ENCODE measurements at regions of chr17 and their contacts with region 1.

Region 1: GRCh38 chr17:75261336-75262111 is at the starts of genes GGA3 and MRPS7:
- DNase-seq: peak; percentile 92 to 97 (median 95)
- ATAC-seq: peak; percentile 94
- H3K4me3 ChIP-seq: peak within 1 kb of the TSS; percentile 90
- H3K4me3 Mint-ChIP-seq: peak within 1 kb of the TSS; percentile 100
- H3K27ac ChIP-seq: peak within 1 kb of the TSS; percentile 94 to 96
- H3K27ac Mint-ChIP-seq: peak within 1 kb of the TSS; percentile 100
- H3K4me1 ChIP-seq: peaks cover 35% of the 10 kb centered on the region
- H3K4me1 Mint-ChIP-seq: peaks cover 58% of the 10 kb centered on the region
- H3K27me3 ChIP-seq: no peaks in the 10 kb centered on the region
- H3K27me3 Mint-ChIP-seq: no peaks in the 10 kb centered on the region
- CTCF ChIP-seq: no peak
- total RNA-seq, gene GGA3: 88.8 to 96.5 TPM
- total RNA-seq, gene MRPS7: 33.2 to 35.2 TPM

Region 2: GRCh38 chr17:74873038-74873873 is 388.3 kb before region 1 on chr17:
- CTCF ChIA-PET with region 1: no interaction called
- POLR2A ChIA-PET with region 1: interaction called, 6 read pairs
- intact Hi-C with region 1: loop called in 1 of 2 experiments (anchors 5 kb)
- DNase-seq: peak; percentile 98 to 100 (median 99)
- ATAC-seq: peak; percentile 94
- H3K4me3 ChIP-seq: peak overlapping the region; percentile 67
- H3K4me3 Mint-ChIP-seq: peak overlapping the region; percentile 90
- H3K27ac ChIP-seq: peak overlapping the region; percentile 89 to 92
- H3K27ac Mint-ChIP-seq: peak overlapping the region; percentile 92
- H3K4me1 ChIP-seq: peaks cover 25% of the 10 kb centered on the region
- H3K4me1 Mint-ChIP-seq: peaks cover 24% of the 10 kb centered on the region
- H3K27me3 ChIP-seq: no peaks in the 10 kb centered on the region
- H3K27me3 Mint-ChIP-seq: no peaks in the 10 kb centered on the region
- CTCF ChIP-seq: no peak

Region 3: GRCh38 chr17:74888469-74888868 is 373.1 kb before region 1 on chr17:
- CTCF ChIA-PET with region 1: no interaction called
- POLR2A ChIA-PET with region 1: no interaction called
- intact Hi-C with region 1: no loop called
- DNase-seq: no peak
- ATAC-seq: no peak
- H3K4me3 ChIP-seq: no peak overlapping the region
- H3K4me3 Mint-ChIP-seq: no peak overlapping the region
- H3K27ac ChIP-seq: no peak overlapping the region
- H3K27ac Mint-ChIP-seq: no peak overlapping the region
- H3K4me1 ChIP-seq: peaks cover 10% of the 10 kb centered on the region
- H3K4me1 Mint-ChIP-seq: no peaks in the 10 kb centered on the region
- H3K27me3 ChIP-seq: peaks cover 19 to 23% of the 10 kb centered on the region in 2 experiments
- H3K27me3 Mint-ChIP-seq: peaks cover 20% of the 10 kb centered on the region
- CTCF ChIP-seq: no peak

Region 4: DNA sequence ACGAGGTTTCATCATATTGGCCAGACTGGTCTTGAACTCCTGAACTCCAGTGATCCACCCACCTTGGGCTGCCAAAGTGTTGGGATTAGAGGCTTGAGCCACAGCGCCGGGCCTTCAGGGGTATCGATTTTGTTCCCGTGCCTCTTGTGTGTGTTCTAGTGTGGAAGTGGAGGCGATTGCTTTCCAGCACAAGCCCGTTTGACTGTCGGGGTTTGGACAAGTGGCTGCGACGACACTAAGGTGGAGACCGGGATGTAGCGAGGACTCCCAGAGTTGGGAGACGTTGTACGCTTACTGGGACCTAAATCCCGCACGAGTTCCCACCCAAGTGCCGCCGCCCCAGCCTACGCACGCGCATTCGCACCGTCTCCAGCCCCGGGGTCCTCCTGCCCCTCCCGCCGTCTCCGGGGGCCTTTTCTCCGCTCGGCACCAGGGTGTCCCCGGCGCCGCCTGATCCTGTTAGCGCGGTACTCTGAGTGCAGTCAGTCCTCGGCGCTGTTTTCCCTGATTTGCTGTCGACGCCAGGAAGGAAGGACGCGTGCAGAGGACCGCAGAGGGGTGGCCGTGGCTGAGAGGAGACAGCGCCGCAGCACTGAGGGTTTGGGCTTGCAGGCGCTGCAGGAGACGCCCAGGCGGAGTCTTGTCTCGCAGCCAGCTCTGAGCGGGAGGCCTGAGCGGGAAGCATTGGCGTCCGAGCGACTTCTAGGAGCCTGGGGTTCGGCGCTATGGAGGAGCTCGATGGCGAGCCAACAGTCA is 56.3 kb before region 1 on chr17 and contains the start of gene NUP85:
- CTCF ChIA-PET with region 1: no interaction called
- POLR2A ChIA-PET with region 1: interaction called, 12 read pairs
- intact Hi-C with region 1: loop called in 1 of 2 experiments (anchors 2 kb)
- DNase-seq: peak; percentile 87 to 95 (median 90)
- ATAC-seq: peak; percentile 89
- H3K4me3 ChIP-seq: peak within 1 kb of the TSS; percentile 95
- H3K4me3 Mint-ChIP-seq: peak within 1 kb of the TSS; percentile 96
- H3K27ac ChIP-seq: peak within 1 kb of the TSS; percentile 91 to 94
- H3K27ac Mint-ChIP-seq: peak within 1 kb of the TSS; percentile 95
- H3K4me1 ChIP-seq: peaks cover 28% of the 10 kb centered on the region
- H3K4me1 Mint-ChIP-seq: peaks cover 27% of the 10 kb centered on the region
- H3K27me3 ChIP-seq: no peaks in the 10 kb centered on the region
- H3K27me3 Mint-ChIP-seq: no peaks in the 10 kb centered on the region
- CTCF ChIP-seq: no peak
- total RNA-seq, gene NUP85: 84.7 to 89.2 TPM

Region 5: GRCh38 chr17:75238684-75239191 is 22.8 kb before region 1 on chr17:
- CTCF ChIA-PET with region 1: interaction called, 31 read pairs
- POLR2A ChIA-PET with region 1: interaction called, 6 read pairs
- intact Hi-C with region 1: no loop called
- DNase-seq: peak; percentile 45 to 82 (median 54)
- ATAC-seq: peak; percentile 52
- H3K4me3 ChIP-seq: no peak overlapping the region
- H3K4me3 Mint-ChIP-seq: peak overlapping the region; percentile 12
- H3K27ac ChIP-seq: peak overlapping the region in 1 of 2 donors; percentile 26
- H3K27ac Mint-ChIP-seq: peak overlapping the region; percentile 68
- H3K4me1 ChIP-seq: peaks cover 47% of the 10 kb centered on the region
- H3K4me1 Mint-ChIP-seq: peaks cover 18% of the 10 kb centered on the region
- H3K27me3 ChIP-seq: no peaks in the 10 kb centered on the region
- H3K27me3 Mint-ChIP-seq: no peaks in the 10 kb centered on the region
- CTCF ChIP-seq: peak; percentile 71

Region 6: DNA sequence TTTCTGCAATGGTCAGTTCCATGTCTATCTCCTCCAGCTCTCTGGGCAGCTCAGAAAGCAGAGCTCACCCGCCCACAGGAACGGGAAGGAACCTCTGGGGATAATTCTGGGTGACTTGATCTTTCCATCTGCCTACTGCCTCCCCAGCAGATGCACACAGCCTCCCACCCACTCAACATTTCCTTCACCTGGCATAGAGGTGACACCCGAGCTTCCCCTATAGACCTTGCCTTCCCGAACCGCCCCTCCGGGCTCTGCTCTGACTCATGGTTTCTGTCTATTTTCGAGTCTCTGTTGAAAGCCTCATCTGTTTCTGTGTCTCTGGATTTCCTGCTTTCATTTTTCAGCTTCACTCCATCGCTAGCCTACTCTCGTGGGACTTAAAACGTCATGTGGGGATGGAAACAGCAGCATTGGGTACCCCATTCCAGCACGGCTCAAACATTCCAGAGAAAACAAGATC is 11.5 kb before region 1 on chr17:
- CTCF ChIA-PET with region 1: interaction called, 8 read pairs
- POLR2A ChIA-PET with region 1: interaction called, 24 read pairs
- intact Hi-C with region 1: loop called in 1 of 2 experiments (anchors 1 kb)
- DNase-seq: peak; percentile 23 to 78 (median 64)
- ATAC-seq: peak; percentile 97
- H3K4me3 ChIP-seq: peak overlapping the region; percentile 35
- H3K4me3 Mint-ChIP-seq: peak overlapping the region; percentile 75
- H3K27ac ChIP-seq: peak overlapping the region; percentile 45 to 53
- H3K27ac Mint-ChIP-seq: peak overlapping the region; percentile 85
- H3K4me1 ChIP-seq: peaks cover 29% of the 10 kb centered on the region
- H3K4me1 Mint-ChIP-seq: peaks cover 53% of the 10 kb centered on the region
- H3K27me3 ChIP-seq: no peaks in the 10 kb centered on the region
- H3K27me3 Mint-ChIP-seq: no peaks in the 10 kb centered on the region
- CTCF ChIP-seq: no peak

Region 7: GRCh38 chr17:75412455-75413317 is 151.2 kb after region 1 on chr17:
- CTCF ChIA-PET with region 1: interaction called, 14 read pairs
- POLR2A ChIA-PET with region 1: interaction called, 6 read pairs
- intact Hi-C with region 1: no loop called
- DNase-seq: peak; percentile 55 to 89 (median 66)
- ATAC-seq: peak; percentile 94
- H3K4me3 ChIP-seq: peak overlapping the region; percentile 11
- H3K4me3 Mint-ChIP-seq: peak overlapping the region; percentile 11
- H3K27ac ChIP-seq: no peak overlapping the region
- H3K27ac Mint-ChIP-seq: no peak overlapping the region
- H3K4me1 ChIP-seq: peaks cover 14% of the 10 kb centered on the region
- H3K4me1 Mint-ChIP-seq: peaks cover 16% of the 10 kb centered on the region
- H3K27me3 ChIP-seq: no peaks in the 10 kb centered on the region
- H3K27me3 Mint-ChIP-seq: no peaks in the 10 kb centered on the region
- CTCF ChIP-seq: peak; percentile 81

Region 8: DNA sequence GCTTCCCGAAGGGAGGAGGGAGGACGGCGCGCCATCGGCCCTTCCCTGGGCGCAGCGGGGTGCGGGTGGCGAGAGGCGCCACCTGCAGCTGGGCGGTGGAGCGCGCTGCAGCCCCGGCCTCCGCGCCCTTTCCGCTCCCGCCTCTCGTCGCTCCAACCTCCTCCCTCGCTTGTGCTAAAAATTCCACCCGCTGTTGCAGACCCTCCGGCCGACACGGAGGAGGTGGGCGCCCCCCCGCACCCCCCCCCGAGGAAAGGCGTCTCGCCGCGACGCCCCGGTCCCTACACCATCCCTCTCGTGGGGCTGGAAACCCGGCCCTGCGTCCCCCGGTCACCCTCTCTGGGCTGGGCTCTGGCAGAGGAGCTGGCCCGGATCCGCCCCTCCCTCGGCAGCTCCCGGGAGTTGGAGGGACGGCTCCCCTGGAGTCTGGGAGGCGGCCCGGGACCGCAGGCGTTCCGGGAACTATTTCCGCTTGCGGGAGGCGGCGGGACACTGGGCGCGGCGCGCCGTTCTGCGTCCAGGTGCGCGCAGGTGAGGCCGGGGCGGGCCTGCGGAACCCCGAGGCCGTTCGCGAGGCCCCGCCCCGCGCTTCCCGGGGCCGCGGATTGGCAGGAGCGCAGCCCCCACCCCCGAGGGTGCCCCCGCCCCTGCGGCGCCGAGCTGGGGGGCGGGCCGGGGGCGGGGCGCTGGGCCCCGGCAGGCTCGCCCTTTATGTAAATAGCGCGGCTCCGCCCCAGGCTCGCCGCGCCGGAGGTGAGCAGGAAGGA is 263.6 kb after region 1 on chr17 and contains the start of gene LLGL2:
- CTCF ChIA-PET with region 1: no interaction called
- POLR2A ChIA-PET with region 1: no interaction called
- intact Hi-C with region 1: loop called in 1 of 2 experiments (anchors 2 kb)
- DNase-seq: peak; percentile 68 to 96 (median 84)
- ATAC-seq: peak; percentile 91
- H3K4me3 ChIP-seq: peak within 1 kb of the TSS; percentile 64
- H3K4me3 Mint-ChIP-seq: peak within 1 kb of the TSS; percentile 82
- H3K27ac ChIP-seq: no peak within 1 kb of the TSS
- H3K27ac Mint-ChIP-seq: no peak within 1 kb of the TSS
- H3K4me1 ChIP-seq: peaks cover 28% of the 10 kb centered on the region
- H3K4me1 Mint-ChIP-seq: peaks cover 24% of the 10 kb centered on the region
- H3K27me3 ChIP-seq: no peaks in the 10 kb centered on the region
- H3K27me3 Mint-ChIP-seq: no peaks in the 10 kb centered on the region
- CTCF ChIP-seq: peak; percentile 44
- total RNA-seq, gene LLGL2: 31.2 to 34.2 TPM

Measured in CD4-positive, alpha-beta T cell (primary cell).